ENCODE measurements at regions of chr2 and their contacts with region 1.

Region 1: DNA sequence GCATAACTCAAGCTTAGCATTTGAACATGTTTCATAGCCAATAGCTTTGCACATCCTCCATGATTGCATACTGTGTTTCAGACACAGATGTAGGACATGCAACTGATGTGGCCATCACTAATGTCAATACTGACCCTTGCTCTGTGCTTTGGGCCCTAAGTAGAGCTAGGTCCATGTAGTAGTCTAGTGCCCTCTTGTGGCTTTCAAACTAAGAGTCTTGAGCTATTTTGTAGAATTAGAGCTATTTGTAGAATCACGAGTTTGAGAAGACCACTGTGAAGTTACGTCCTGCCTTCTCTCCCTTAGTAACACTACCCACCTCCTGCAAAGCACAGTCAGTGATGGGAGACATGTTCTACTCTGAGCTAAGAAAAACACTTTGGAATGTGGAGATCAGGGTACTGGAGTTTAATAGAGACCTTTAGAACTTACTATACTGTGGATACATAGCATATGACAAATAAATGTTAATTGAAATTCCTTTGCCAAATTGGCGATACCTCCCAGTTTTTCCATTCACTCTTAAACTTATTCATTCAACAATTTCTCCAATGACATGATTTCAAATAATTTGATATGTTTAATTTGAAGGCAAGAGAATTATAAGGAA is 306.5 kb upstream of the TNP1 start:
- DNase-seq: peak; percentile 30
- H3K4me3 ChIP-seq: no peak overlapping the region
- H3K27ac ChIP-seq: no peak overlapping the region
- H3K4me1 ChIP-seq: peaks cover 4 to 7% of the 10 kb centered on the region in 2 experiments; a peak in 2 of 4 replicates
- H3K27me3 ChIP-seq: no peaks in the 10 kb centered on the region
- CTCF ChIP-seq: peak; percentile 73
- EP300 ChIP-seq: no peak
- RAD21 ChIP-seq: peak; percentile 87

Region 2: GRCh38 chr2:216507220-216508160 is 658.9 kb before region 1 on chr2:
- CTCF ChIA-PET with region 1: no interaction called
- POLR2A ChIA-PET with region 1: no interaction called
- DNase-seq: no peak
- H3K4me3 ChIP-seq: no peak overlapping the region
- H3K27ac ChIP-seq: no peak overlapping the region; a peak in 1 of 4 replicates
- H3K4me1 ChIP-seq: peaks cover 7 to 14% of the 10 kb centered on the region in 2 experiments; a peak in 2 of 4 replicates
- H3K27me3 ChIP-seq: no peaks in the 10 kb centered on the region
- CTCF ChIP-seq: no peak
- EP300 ChIP-seq: no peak
- RAD21 ChIP-seq: no peak

Region 3: DNA sequence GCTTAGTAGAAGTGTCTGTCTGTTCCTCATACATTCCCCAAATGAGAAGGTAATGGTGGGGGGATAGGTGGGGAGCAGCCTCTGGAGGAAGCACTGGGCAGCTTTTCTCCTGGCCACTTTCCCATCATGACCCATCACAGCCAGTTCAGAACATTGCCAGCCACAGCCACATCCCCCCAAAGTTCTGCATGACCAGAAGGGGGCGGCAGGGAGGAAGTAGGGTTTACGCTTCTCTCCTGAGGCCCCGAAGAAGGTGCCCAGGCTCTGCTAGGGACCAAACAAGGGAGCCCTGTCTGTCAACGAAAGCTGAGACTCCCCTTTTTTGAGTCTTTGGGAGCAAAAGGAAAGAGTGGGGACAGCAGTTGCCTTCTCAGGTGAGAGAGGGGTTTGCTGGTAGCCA is 478.7 kb before region 1 on chr2:
- CTCF ChIA-PET with region 1: interaction called, 18 read pairs
- POLR2A ChIA-PET with region 1: no interaction called
- DNase-seq: no peak
- H3K4me3 ChIP-seq: no peak overlapping the region; a peak in 1 of 4 replicates
- H3K27ac ChIP-seq: no peak overlapping the region
- H3K4me1 ChIP-seq: peaks cover 12 to 29% of the 10 kb centered on the region in 2 experiments; a peak in 3 of 4 replicates
- H3K27me3 ChIP-seq: no peaks in the 10 kb centered on the region
- CTCF ChIP-seq: peak; percentile 53
- EP300 ChIP-seq: no peak
- RAD21 ChIP-seq: no peak

Region 4: DNA sequence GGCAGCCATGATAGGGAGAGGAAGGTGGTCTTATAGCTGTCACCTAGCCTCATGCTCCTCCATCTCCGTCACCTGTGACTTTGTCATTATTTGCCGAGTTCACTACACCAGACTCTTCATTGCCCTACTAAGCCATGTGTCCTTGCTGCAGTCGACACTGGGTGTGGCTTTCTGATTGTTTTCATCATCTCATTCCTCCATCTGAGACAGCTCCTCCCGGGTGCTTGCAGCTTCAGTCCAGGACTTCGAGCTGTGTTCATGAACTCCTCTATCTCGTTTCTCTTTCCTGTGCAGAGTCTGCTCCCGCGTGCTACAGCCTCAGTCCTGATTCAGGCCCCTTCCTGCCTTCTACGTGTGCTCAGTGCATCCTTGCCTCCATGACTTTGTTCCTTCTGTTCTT is 11.4 kb before region 1 on chr2:
- CTCF ChIA-PET with region 1: interaction called, 11 read pairs
- POLR2A ChIA-PET with region 1: no interaction called
- DNase-seq: no peak
- H3K4me3 ChIP-seq: no peak overlapping the region
- H3K27ac ChIP-seq: no peak overlapping the region
- H3K4me1 ChIP-seq: peaks cover 0 to 3% of the 10 kb centered on the region in 2 experiments; a peak in 1 of 4 replicates
- H3K27me3 ChIP-seq: no peaks in the 10 kb centered on the region
- CTCF ChIP-seq: no peak
- EP300 ChIP-seq: no peak
- RAD21 ChIP-seq: no peak

Region 5: DNA sequence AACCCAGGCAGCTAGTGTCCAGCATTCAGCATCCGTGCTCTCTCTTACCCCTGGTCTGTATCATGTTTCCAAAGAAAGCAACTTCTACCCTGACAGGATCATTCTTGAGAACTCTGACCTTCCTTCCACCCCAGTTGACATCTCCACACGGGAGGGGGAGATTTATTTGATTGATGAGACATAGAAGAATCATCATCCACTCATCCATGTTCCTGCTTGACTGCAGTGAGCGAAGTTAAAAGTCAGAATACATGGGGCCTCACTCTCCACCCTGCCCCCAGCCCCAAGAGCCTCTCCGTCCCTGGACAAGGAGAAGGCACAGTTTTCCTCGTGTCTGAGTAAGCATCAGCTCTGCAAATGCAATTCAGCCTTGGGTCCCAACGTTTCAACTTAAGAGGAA is 49.5 kb after region 1 on chr2:
- CTCF ChIA-PET with region 1: no interaction called
- POLR2A ChIA-PET with region 1: no interaction called
- DNase-seq: no peak
- H3K4me3 ChIP-seq: no peak overlapping the region
- H3K27ac ChIP-seq: no peak overlapping the region
- H3K4me1 ChIP-seq: 0 out of 4 replicates have a peak, but pooled peaks cover 0 to 4% of the 10 kb centered on the region in 2 experiments
- H3K27me3 ChIP-seq: no peaks in the 10 kb centered on the region
- CTCF ChIP-seq: no peak
- EP300 ChIP-seq: no peak
- RAD21 ChIP-seq: no peak

Measured in SK-N-SH (cell line).